Left ventricle myocardium superior (tissue), 1 donor: ENCODE measurements at regions of chr2 and their contacts with region 1.

Region 1: GRCh38 chr2:47906157-47907038 is at the start of gene FBXO11:
- DNase-seq: peak; percentile 95
- ATAC-seq: peak; percentile 95
- total RNA-seq, gene FBXO11: 36.6 TPM

Region 2: DNA sequence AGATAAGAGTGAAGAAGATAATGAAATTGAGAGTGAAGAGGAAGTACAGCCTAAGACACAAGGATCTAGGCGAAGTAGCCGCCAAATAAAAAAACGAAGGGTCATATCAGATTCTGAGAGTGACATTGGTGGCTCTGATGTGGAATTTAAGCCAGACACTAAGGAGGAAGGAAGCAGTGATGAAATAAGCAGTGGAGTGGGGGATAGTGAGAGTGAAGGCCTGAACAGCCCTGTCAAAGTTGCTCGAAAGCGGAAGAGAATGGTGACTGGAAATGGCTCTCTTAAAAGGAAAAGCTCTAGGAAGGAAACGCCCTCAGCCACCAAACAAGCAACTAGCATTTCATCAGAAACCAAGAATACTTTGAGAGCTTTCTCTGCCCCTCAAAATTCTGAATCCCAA is 107.8 kb before region 1 on chr2:
- intact Hi-C with region 1: no loop called
- DNase-seq: no peak
- ATAC-seq: peak; percentile 59

Region 3: DNA sequence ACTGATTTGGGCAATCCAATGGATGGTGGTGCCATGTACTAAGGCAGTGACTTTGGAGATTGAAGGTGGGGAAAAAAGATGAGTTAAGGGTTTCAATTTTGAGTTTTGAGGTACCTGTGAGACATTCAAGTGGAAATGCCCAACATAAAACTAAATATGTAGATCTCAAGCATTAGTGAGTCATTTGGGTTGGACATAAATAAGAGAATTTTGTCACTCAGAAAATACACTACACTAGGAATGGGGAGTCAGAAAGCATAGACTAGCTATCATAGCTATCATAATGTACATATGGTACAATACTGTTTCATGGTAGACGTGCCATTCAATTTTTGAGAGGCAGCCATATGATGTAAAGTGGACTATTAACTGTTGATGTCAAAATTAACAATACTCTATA is 56.2 kb before region 1 on chr2:
- intact Hi-C with region 1: loop called (anchors 10 kb)
- DNase-seq: no peak
- ATAC-seq: no peak

Region 4: GRCh38 chr2:48343571-48344440 is 437.4 kb after region 1 on chr2:
- intact Hi-C with region 1: loop called (anchors 5 kb)
- DNase-seq: no peak
- ATAC-seq: no peak